ENCODE measurements at regions of chr4 and their contacts with region 1.

Region 1: GRCh38 chr4:74228691-74229640 is 71.0 kb downstream of the MTHFD2L start:
- DNase-seq: peak; percentile 79
- ATAC-seq: peak; percentile 73
- H3K4me3 ChIP-seq: no peak overlapping the region
- H3K4me3 Mint-ChIP-seq: no peak overlapping the region
- H3K27ac ChIP-seq: no peak overlapping the region
- H3K27ac Mint-ChIP-seq: no peak overlapping the region
- H3K4me1 ChIP-seq: no peaks in the 10 kb centered on the region
- H3K4me1 Mint-ChIP-seq: no peaks in the 10 kb centered on the region
- H3K27me3 ChIP-seq: no peaks in the 10 kb centered on the region
- H3K27me3 Mint-ChIP-seq: no peaks in the 10 kb centered on the region
- CTCF ChIP-seq: peak; percentile 92

Region 2: DNA sequence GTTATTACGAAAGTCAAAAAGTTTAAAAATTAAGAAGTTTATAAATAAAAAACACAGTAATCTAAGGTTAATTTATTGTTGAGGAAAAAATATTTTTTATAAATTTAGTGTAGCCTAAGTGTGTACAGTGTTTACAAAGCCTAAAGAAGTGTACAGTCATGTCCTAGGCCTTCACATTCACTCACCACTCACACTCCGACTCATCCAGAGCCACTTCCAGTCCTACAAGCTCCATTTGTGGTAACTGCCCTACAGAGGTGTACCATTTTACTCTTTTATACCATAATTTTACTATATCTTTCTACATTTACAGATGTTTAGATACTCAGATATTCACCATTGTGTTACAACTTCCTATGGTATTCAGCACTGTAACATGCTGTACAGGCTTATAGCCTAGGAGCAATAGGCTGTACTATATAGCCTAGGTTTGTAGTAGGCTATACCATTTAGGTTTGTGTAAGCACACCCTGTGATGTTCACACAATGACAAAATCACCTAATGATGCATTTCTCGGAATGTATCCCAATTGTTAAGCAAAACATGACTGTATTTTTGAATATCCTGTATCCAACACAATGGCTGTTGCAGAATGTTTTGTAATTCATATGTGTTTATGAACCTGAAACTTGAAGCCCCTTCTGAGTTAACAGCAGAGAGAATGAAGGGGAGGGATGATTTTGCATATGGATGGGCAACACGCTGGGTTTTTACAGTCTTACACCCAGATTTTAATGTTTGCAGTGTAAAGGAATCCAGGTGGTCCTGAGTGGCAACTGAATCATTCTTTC is 244.0 kb before region 1 on chr4:
- CTCF ChIA-PET with region 1: no interaction called
- POLR2A ChIA-PET with region 1: no interaction called
- intact Hi-C with region 1: no loop called
- DNase-seq: no peak
- ATAC-seq: no peak
- H3K4me3 ChIP-seq: no peak overlapping the region
- H3K4me3 Mint-ChIP-seq: no peak overlapping the region
- H3K27ac ChIP-seq: no peak overlapping the region
- H3K27ac Mint-ChIP-seq: no peak overlapping the region
- H3K4me1 ChIP-seq: no peaks in the 10 kb centered on the region
- H3K4me1 Mint-ChIP-seq: no peaks in the 10 kb centered on the region
- H3K27me3 ChIP-seq: no peaks in the 10 kb centered on the region
- H3K27me3 Mint-ChIP-seq: peaks cover 10% of the 10 kb centered on the region
- CTCF ChIP-seq: no peak

Region 3: DNA sequence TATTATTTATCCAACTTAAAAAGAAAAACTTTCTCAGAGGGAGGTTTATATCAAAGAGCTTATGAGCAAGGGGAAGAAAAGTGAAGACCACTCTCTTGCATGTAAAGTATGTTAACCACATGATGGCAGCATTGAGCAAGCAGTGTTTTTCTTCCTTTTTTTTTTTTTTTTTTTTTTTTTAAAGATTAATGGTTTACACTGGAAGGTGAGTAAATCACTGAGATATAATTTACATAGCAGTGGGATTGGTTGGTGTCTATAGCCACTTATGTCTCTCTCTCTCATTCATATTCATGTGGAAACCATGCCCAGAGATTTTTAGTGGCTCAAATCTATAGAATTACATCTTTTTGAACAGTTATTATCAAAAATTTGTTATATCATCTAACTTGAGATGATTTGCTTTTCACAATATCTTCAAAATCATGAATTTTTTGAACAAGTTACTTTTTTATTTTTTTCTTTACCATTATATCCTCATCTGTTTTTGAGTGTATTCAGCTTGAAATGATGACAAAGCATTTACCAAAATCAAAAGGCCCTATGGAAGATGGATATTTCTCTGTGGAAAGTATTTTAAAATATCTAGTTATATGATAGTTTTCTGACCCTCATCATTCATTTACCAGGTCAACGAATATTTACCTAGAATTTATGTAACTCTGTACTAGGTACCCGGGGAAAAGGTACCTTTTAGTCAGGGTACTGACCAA is 39.5 kb before region 1 on chr4:
- CTCF ChIA-PET with region 1: interaction called, 25 read pairs
- POLR2A ChIA-PET with region 1: no interaction called
- intact Hi-C with region 1: loop called (anchors 1 kb)
- DNase-seq: peak; percentile 73
- ATAC-seq: peak; percentile 58
- H3K4me3 ChIP-seq: no peak overlapping the region
- H3K4me3 Mint-ChIP-seq: no peak overlapping the region
- H3K27ac ChIP-seq: no peak overlapping the region
- H3K27ac Mint-ChIP-seq: no peak overlapping the region
- H3K4me1 ChIP-seq: no peaks in the 10 kb centered on the region
- H3K4me1 Mint-ChIP-seq: no peaks in the 10 kb centered on the region
- H3K27me3 ChIP-seq: no peaks in the 10 kb centered on the region
- H3K27me3 Mint-ChIP-seq: no peaks in the 10 kb centered on the region
- CTCF ChIP-seq: peak; percentile 95

Region 4: DNA sequence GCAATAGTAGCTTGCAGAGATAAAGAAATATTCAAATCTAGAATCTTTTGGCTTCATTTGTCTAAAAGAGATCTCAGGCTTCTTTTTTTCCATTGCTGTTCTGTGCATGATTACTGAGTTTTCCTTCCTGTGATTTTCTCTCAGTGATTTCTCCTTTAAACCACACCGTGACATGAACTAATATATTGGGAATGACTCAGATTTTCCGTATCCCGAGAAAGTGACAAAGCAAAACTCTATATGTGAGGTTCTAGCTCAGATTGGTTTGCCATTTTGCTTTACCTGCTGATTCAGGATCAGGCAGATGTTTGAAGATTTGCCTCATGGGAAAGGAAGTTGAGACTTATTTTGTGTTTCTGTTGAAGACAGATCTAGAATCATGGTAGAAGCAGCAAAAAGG is 11.6 kb before region 1 on chr4:
- CTCF ChIA-PET with region 1: interaction called, 10 read pairs
- POLR2A ChIA-PET with region 1: no interaction called
- intact Hi-C with region 1: no loop called
- DNase-seq: no peak
- ATAC-seq: no peak
- H3K4me3 ChIP-seq: no peak overlapping the region
- H3K4me3 Mint-ChIP-seq: no peak overlapping the region
- H3K27ac ChIP-seq: no peak overlapping the region
- H3K27ac Mint-ChIP-seq: no peak overlapping the region
- H3K4me1 ChIP-seq: no peaks in the 10 kb centered on the region
- H3K4me1 Mint-ChIP-seq: peaks cover 5% of the 10 kb centered on the region
- H3K27me3 ChIP-seq: no peaks in the 10 kb centered on the region
- H3K27me3 Mint-ChIP-seq: no peaks in the 10 kb centered on the region
- CTCF ChIP-seq: no peak

Region 5: DNA sequence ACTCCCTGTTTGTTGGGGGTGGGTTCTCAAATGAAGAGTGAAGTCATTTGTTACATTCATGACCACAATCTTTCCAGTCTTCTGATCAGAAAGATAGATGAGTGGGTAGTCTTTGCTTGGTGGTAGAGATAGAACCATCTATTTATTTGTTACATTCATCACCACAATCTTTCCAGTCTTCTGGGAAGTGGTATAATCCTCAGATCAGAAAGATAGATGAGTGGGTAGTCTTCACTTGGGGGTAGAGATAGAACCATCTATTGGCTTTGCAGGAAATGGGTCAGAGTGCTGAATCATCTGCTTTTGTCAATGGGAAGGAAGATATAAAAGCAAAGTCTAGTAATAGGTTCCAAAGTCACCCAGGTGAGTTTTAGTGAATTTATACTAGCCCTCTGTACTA is 15.1 kb after region 1 on chr4:
- CTCF ChIA-PET with region 1: interaction called, 10 read pairs
- POLR2A ChIA-PET with region 1: no interaction called
- intact Hi-C with region 1: no loop called
- DNase-seq: no peak
- ATAC-seq: no peak
- H3K4me3 ChIP-seq: no peak overlapping the region
- H3K4me3 Mint-ChIP-seq: no peak overlapping the region
- H3K27ac ChIP-seq: no peak overlapping the region
- H3K27ac Mint-ChIP-seq: no peak overlapping the region
- H3K4me1 ChIP-seq: no peaks in the 10 kb centered on the region
- H3K4me1 Mint-ChIP-seq: no peaks in the 10 kb centered on the region
- H3K27me3 ChIP-seq: no peaks in the 10 kb centered on the region
- H3K27me3 Mint-ChIP-seq: no peaks in the 10 kb centered on the region
- CTCF ChIP-seq: no peak

Region 6: GRCh38 chr4:74531963-74532794 is 303.2 kb after region 1 on chr4:
- CTCF ChIA-PET with region 1: interaction called, 23 read pairs
- POLR2A ChIA-PET with region 1: no interaction called
- intact Hi-C with region 1: no loop called
- DNase-seq: peak; percentile 66
- ATAC-seq: peak; percentile 53
- H3K4me3 ChIP-seq: no peak overlapping the region
- H3K4me3 Mint-ChIP-seq: no peak overlapping the region
- H3K27ac ChIP-seq: no peak overlapping the region
- H3K27ac Mint-ChIP-seq: no peak overlapping the region
- H3K4me1 ChIP-seq: no peaks in the 10 kb centered on the region
- H3K4me1 Mint-ChIP-seq: no peaks in the 10 kb centered on the region
- H3K27me3 ChIP-seq: peaks cover 0 to 4% (median 0%) of the 10 kb centered on the region in 4 experiments
- H3K27me3 Mint-ChIP-seq: peaks cover 13% of the 10 kb centered on the region
- CTCF ChIP-seq: peak; percentile 62

Region 7: DNA sequence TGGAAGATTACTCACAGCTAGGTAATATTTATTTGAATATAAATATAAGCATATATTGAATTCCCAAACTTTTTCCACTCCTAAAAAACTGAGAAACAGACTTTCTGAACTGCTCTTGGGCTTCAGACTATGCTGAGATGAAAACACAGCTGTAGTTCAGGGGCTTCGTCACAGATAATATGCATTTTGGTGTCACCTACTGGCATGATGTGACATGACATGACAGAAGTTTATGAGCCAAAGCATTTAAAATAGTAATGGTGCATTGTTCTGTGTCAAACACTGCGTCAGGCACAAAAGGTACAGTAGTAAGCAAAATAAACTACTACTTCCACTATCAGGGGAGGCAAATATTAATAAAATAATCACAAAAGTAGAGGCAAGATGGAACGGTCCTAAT is 394.1 kb after region 1 on chr4:
- CTCF ChIA-PET with region 1: interaction called, 13 read pairs
- POLR2A ChIA-PET with region 1: no interaction called
- intact Hi-C with region 1: no loop called
- DNase-seq: peak; percentile 39
- ATAC-seq: no peak
- H3K4me3 ChIP-seq: no peak overlapping the region
- H3K4me3 Mint-ChIP-seq: no peak overlapping the region
- H3K27ac ChIP-seq: no peak overlapping the region
- H3K27ac Mint-ChIP-seq: no peak overlapping the region
- H3K4me1 ChIP-seq: no peaks in the 10 kb centered on the region
- H3K4me1 Mint-ChIP-seq: no peaks in the 10 kb centered on the region
- H3K27me3 ChIP-seq: no peaks in the 10 kb centered on the region
- H3K27me3 Mint-ChIP-seq: peaks cover 10% of the 10 kb centered on the region
- CTCF ChIP-seq: peak; percentile 59

Region 8: GRCh38 chr4:74675673-74676279 is 446.8 kb after region 1 on chr4:
- CTCF ChIA-PET with region 1: interaction called, 26 read pairs
- POLR2A ChIA-PET with region 1: no interaction called
- intact Hi-C with region 1: loop called (anchors 1 kb)
- DNase-seq: peak; percentile 44
- ATAC-seq: peak; percentile 56
- H3K4me3 ChIP-seq: no peak overlapping the region
- H3K4me3 Mint-ChIP-seq: no peak overlapping the region
- H3K27ac ChIP-seq: no peak overlapping the region
- H3K27ac Mint-ChIP-seq: no peak overlapping the region
- H3K4me1 ChIP-seq: no peaks in the 10 kb centered on the region
- H3K4me1 Mint-ChIP-seq: peaks cover 3% of the 10 kb centered on the region
- H3K27me3 ChIP-seq: no peaks in the 10 kb centered on the region
- H3K27me3 Mint-ChIP-seq: peaks cover 31% of the 10 kb centered on the region
- CTCF ChIP-seq: peak; percentile 79

Measured in B cell (primary cell).